BJ (cell line): ENCODE measurements at regions of chr12 and their contacts with region 1.

Region 1: GRCh38 chr12:122785503-122785902 is 11.1 kb downstream of the CCDC62 start:
- DNase-seq: no peak
- H3K4me3 ChIP-seq: no peak overlapping the region
- H3K27me3 ChIP-seq: no peaks in the 10 kb centered on the region
- CTCF ChIP-seq: no peak

Region 2: DNA sequence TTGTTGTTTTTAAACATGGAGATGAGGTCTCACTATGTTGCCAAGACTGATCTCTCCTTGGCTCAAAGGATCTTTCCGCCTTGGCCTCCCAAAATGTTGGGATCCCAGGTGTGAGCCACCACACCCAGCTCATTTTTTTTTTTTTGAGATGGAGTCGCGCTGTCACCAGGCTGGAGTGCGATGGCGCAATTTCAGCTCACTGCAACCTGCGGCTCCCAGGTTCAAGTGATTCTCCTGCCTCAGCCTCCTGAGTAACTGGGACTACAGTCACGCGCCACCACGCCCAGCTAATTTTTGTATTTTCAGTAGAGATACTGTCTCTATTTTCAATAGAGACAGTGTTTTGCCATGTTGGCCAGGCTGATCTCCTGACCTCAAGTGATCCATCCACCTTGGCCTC is 358.1 kb before region 1 on chr12:
- CTCF ChIA-PET with region 1: no interaction called
- POLR2A ChIA-PET with region 1: interaction called, 11 read pairs
- DNase-seq: no peak
- H3K4me3 ChIP-seq: no peak overlapping the region
- H3K27me3 ChIP-seq: no peaks in the 10 kb centered on the region
- CTCF ChIP-seq: no peak

Region 3: DNA sequence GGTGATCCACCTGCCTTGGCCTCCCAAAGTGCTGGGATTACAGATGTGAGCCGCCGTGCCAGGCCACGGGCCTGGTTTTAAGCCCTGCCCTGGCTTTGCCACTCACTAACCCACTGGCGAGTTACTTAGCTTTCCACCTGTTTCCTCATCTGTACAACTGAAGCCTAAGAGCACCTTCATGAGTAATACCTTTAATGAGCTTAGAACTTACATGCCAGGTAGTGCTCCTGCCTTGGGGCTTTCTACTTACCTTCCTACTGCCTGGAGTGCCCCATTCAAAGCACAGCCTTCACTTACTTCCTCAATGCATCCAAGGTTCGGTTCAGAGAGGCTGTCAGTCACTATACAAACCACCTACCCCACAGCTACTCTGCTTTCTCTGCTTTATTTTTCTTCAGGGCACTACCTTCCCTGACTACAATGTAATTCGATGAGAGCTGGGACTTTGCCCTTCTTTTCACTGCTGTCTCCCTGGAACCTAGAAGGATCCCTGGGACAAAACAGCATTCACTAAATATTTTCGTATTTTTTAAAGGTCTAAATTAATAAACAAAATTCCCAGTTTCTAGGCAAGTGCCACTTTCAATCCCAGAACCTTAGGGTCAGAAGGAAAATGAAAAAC is 298.6 kb before region 1 on chr12:
- CTCF ChIA-PET with region 1: no interaction called
- POLR2A ChIA-PET with region 1: no interaction called
- DNase-seq: no peak
- H3K4me3 ChIP-seq: no peak overlapping the region
- H3K27me3 ChIP-seq: no peaks in the 10 kb centered on the region
- CTCF ChIP-seq: no peak

Region 4: DNA sequence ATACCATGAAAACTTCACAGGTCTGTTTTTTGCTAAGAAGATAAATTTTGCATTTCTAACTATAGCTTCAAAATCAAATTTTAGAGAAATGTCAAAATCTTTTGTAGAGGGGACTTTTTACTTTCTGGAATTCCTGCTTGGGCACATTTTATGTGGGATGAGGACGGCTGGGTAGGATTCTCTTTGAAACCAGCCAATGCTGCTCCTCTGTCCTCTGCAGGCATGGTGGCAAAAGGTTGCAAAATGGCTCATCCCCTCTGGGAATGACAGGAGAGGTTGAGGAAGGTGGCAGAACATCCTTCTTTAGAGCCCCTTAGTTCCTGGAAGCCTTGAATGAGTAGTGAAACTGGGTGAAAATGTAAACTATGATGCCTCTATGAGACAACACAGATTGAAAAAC is 17.8 kb before region 1 on chr12:
- CTCF ChIA-PET with region 1: no interaction called
- POLR2A ChIA-PET with region 1: no interaction called
- DNase-seq: no peak
- H3K4me3 ChIP-seq: no peak overlapping the region
- H3K27me3 ChIP-seq: no peaks in the 10 kb centered on the region
- CTCF ChIP-seq: no peak